Common myeloid progenitor, CD34-positive (primary cell): ENCODE measurements at regions of chr16 and their contacts with region 1.

Region 1: GRCh38 chr16:57576429-57576870 is 34.0 kb downstream of the ADGRG5 start:
- DNase-seq: peak; percentile 73 to 86 (median 79)
- H3K4me3 ChIP-seq: no peak overlapping the region
- H3K27ac ChIP-seq: no peak overlapping the region
- H3K4me1 ChIP-seq: peaks cover 0 to 48% (median 31%) of the 10 kb centered on the region in 4 experiments
- H3K27me3 ChIP-seq: no peaks in the 10 kb centered on the region

Region 2: DNA sequence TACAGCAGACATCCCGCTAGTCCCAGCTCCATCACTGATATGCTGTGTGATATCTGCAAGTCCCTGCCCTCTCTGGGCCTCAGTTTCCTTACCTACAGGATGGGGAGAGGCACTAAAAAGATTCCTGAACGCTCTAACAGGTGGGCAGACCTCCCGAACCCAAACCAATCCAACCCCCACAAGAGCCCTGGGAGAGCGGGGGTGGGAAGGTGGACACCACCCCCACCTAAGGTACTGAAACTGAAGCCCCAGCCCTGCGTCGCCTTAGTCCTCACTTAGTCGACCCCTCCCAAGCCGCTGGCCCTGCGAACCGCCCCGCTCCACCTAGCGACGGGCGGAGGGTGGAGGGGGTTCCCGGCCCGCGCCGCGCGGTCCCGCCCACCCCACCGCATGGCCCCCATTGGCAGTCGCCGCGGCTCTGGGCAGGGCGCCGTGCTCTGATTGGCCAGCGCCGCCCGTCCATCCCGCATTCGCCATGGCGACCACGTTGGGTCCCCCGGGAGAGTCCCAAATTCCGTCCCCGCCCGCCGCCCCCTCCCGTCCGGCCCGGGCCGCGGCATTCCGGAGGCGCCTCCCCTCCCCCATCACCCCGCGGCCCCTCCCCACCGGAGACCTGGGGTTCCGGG is 40.7 kb before region 1 on chr16:
- CTCF ChIA-PET with region 1: interaction called, 109 read pairs
- POLR2A ChIA-PET with region 1: interaction called, 5 read pairs
- DNase-seq: peak; percentile 92 to 96 (median 95)
- H3K4me3 ChIP-seq: peak overlapping the region; percentile 42 to 83 (median 73)
- H3K27ac ChIP-seq: peak overlapping the region; percentile 46 to 83
- H3K4me1 ChIP-seq: peaks cover 8 to 92% (median 83%) of the 10 kb centered on the region in 4 experiments
- H3K27me3 ChIP-seq: no peaks in the 10 kb centered on the region

Region 3: GRCh38 chr16:57564571-57565270 is 11.7 kb before region 1 on chr16:
- CTCF ChIA-PET with region 1: interaction called, 28 read pairs
- POLR2A ChIA-PET with region 1: no interaction called
- DNase-seq: no peak
- H3K4me3 ChIP-seq: no peak overlapping the region
- H3K27ac ChIP-seq: no peak overlapping the region
- H3K4me1 ChIP-seq: no peaks in the 10 kb centered on the region
- H3K27me3 ChIP-seq: no peaks in the 10 kb centered on the region

Region 4: DNA sequence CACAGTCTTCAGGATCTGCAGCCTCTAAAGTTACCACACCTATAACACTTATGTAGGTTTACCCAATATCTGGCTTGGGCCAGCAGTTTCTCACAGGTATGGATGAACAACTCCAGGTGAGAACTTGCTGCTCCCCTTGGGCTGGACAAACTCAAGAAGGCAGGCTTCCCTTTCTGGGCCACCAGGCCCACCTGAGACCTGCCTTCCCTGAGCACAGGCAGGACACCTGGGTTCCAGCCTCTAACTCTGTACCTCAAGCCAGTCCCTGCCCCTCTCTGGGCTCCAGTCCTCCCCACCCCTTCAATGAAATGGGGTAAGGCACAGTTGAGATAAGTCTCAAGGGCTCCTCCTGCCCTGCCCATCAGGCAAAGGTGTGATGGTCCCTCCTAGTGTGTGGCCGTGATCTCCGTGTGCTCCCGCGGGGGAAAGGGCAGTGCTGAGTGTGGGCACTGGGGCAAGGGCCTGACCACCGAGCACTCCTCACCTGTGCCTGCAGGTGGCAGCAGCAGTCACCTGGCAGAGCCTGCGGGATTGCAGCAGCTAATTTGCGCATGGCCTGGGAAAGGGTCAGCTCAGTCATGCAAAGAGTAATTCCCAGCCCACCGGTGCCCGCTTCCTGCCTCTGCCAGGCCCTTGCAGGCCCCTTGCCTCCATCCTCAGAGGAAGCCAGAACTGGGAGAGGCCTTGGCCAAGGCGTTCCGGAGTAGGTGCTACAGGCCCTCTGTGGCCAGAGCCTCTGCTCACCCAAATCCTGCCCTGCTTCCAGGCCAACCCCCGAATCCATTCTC is 23.8 kb after region 1 on chr16:
- CTCF ChIA-PET with region 1: interaction called, 17 read pairs
- POLR2A ChIA-PET with region 1: no interaction called
- DNase-seq: peak in 1 of 3 donors; percentile 48
- H3K4me3 ChIP-seq: no peak overlapping the region
- H3K27ac ChIP-seq: no peak overlapping the region
- H3K4me1 ChIP-seq: peaks cover 19 to 54% (median 50%) of the 10 kb centered on the region in 4 experiments
- H3K27me3 ChIP-seq: no peaks in the 10 kb centered on the region

Region 5: DNA sequence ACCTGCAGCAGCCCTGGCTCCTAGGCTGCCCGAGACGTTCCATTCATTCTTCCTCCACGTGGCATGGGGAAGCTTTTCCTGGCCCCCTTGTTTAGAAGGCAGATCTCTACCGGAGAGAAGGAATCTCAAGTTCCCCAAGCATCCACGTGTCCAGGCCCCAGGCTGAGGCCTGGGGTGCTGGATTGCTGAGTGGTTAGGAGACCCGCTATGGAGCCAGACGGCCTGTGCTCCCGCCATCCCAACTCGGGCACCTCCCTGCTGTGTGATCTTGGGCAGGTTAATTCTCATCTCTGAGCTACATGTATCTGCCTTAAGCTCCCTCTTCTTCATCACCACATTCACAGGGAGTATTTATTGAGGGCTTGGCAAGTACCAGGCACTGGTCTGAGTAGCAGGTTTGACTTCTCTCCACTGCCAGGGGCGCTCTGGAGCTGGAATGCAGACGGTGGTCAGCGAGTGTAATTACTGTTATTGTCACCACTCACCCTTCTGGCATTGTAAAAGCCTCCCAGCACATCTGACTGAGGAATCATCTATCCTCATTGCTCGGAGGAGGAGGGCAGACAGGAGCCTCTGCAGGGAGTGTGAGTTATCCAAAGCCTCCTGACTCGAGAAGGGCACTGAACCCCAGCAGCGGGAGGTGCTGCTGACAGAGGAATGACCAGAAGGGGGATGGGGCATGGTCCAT is 50.9 kb after region 1 on chr16:
- CTCF ChIA-PET with region 1: no interaction called
- POLR2A ChIA-PET with region 1: no interaction called
- DNase-seq: peak in 2 of 3 donors; percentile 43 to 45
- H3K4me3 ChIP-seq: no peak overlapping the region
- H3K27ac ChIP-seq: no peak overlapping the region
- H3K4me1 ChIP-seq: peaks cover 3 to 81% (median 75%) of the 10 kb centered on the region in 4 experiments
- H3K27me3 ChIP-seq: no peaks in the 10 kb centered on the region

Region 6: GRCh38 chr16:57667526-57668258 is 91.2 kb after region 1 on chr16:
- CTCF ChIA-PET with region 1: interaction called, 19 read pairs
- POLR2A ChIA-PET with region 1: no interaction called
- DNase-seq: no peak
- H3K4me3 ChIP-seq: peak overlapping the region in 1 of 7 experiments; percentile 6
- H3K27ac ChIP-seq: no peak overlapping the region
- H3K4me1 ChIP-seq: peaks cover 0 to 40% (median 34%) of the 10 kb centered on the region in 4 experiments
- H3K27me3 ChIP-seq: no peaks in the 10 kb centered on the region

Region 7: DNA sequence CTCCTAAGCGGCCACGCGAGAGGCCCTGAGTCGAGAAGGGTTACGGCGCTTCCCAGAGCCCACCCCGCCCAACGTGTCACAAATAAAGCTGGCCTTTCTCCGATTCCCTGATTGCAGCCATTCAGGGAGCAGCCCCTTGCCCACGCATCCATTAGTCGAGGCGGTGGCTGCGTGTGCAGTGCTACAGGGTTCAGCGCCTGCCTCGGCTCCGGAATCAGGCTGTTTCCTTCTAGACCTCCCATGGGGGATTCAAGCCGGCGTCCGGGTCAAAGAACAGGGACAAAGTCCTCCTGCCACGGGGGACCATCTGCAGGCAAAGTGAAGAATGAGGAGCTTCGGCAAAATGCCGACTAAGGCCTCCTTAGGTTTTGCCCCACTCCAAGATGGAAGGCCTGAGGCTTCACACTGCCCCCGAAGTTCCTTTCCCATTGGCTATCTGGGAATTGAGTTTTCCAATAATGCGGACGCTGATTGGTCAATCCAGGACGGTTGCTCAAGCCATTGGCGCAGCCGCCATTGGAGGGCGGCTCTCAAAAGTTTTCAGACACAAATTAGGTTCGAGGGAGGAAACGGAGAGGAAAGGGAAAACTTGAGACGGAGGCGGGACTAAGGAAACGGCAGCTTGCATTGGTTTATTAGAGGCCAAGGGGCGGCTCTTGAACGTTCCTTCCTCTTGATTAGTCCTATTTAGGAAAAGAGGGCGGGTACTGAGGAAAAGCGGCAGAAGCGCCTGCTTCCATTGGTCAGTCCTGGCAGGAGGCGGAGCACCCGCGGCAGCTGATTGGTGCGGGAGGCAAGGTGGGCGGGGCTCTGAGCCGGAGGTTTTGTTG is 158.7 kb after region 1 on chr16:
- CTCF ChIA-PET with region 1: interaction called, 11 read pairs
- POLR2A ChIA-PET with region 1: no interaction called
- DNase-seq: peak; percentile 100
- H3K4me3 ChIP-seq: peak overlapping the region; percentile 77 to 94 (median 84)
- H3K27ac ChIP-seq: peak overlapping the region; percentile 93 to 94
- H3K4me1 ChIP-seq: peaks cover 0 to 40% (median 32%) of the 10 kb centered on the region in 4 experiments
- H3K27me3 ChIP-seq: no peaks in the 10 kb centered on the region